ENCODE measurements at regions of chr20 and their contacts with region 1.

Region 1: GRCh38 chr20:57698117-57698866 is 11.5 kb downstream of the PMEPA1 start:
- DNase-seq: peak; percentile 92
- H3K4me3 ChIP-seq: peak overlapping the region; percentile 37
- CTCF ChIP-seq: no peak

Region 2: DNA sequence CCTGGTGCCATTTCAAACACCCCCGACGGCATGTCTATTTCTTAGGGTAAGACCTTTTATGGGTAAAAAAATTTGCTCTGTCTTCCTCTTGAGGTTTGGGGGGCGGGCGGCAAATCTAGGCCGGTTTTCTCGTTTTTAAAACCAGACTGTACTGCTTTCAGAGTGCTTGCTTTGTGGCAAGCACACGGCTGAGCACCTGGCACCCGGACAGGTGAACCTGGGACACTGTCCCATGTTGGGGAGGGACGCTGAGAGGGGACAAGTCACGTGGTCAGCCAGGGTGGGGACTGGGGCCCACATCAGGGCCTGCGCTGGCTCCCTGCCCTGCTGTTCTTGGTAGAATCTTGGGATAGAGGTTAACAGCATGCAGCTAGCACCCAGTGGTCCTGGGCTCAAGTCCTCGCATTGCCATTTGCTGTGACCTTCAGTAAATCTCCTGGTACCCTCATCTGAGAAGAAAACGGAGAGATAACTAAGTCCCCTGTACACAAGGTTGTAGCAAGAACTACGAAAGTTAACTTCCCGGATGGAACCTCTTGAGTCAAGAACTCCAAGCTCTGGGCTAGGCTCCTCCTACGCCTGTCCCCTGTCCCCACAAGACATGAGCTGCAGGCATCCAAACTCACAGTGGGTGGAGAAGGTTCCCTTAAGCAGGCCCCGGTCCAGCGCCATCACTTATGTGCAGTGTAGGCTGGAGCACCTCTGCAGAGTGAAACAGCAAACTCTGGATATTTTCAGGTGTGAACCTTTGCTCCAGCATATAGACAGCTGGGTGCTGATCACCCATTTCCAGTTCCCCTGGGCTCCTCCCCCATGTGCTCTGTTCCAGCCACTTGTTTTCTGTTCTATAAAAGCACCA is 30.1 kb before region 1 on chr20:
- CTCF ChIA-PET with region 1: no interaction called
- POLR2A ChIA-PET with region 1: no interaction called
- DNase-seq: no peak
- H3K4me3 ChIP-seq: no peak overlapping the region
- CTCF ChIP-seq: no peak

Region 3: DNA sequence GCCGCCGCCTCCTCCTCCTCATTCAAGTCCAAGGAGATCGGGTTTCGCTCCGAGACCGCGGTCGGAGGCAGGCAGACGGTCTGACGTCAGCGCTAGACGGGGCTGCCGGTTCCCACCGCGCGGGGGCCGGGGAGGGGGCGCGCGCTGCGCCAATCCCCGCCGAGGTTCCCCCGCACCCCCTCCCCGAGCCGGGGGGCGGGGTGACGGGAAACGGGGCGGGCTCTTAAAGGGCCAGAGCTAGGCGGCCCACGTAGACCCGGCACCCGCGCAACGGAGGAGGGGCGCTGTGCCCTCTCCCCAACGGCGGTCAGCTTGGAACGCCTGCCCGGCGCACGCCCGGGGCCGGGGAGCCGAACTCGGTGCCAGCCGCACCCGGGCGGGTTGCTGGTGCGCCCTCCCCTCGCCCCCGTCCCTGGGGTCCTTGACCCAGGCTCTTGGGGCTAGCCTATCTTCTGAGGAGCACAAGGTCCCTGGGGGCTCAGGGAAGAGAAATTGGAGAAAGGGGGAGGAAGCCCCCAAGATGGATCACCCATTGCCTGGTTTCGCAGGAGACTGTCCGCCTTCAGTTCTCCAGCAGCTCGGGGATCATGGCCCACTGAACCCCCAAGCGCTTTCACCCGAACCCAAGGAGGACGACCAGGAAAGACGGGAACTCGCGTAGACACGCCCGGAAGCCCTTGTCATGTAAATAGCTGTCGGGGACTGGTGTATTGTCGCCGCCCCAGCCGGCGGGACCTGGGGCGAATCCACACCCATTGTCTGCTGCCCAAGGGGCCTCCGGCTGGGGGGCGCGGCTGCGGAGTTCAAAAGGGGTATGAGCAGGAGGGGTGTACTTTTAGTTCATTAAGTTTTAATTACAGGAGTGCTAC is 11.9 kb after region 1 on chr20 and contains the start of gene PMEPA1:
- CTCF ChIA-PET with region 1: interaction called, 8 read pairs
- POLR2A ChIA-PET with region 1: interaction called, 14 read pairs
- DNase-seq: peak; percentile 67
- H3K4me3 ChIP-seq: peak within 1 kb of the TSS; percentile 75
- CTCF ChIP-seq: no peak

Region 4: GRCh38 chr20:57754289-57754688 is 56.0 kb after region 1 on chr20:
- CTCF ChIA-PET with region 1: no interaction called
- POLR2A ChIA-PET with region 1: no interaction called
- DNase-seq: no peak
- H3K4me3 ChIP-seq: no peak overlapping the region
- CTCF ChIP-seq: no peak

Measured in AG04449 (cell line).